HAP-1 (cell line): ENCODE measurements at regions of chr12 and their contacts with region 1.

Region 1: DNA sequence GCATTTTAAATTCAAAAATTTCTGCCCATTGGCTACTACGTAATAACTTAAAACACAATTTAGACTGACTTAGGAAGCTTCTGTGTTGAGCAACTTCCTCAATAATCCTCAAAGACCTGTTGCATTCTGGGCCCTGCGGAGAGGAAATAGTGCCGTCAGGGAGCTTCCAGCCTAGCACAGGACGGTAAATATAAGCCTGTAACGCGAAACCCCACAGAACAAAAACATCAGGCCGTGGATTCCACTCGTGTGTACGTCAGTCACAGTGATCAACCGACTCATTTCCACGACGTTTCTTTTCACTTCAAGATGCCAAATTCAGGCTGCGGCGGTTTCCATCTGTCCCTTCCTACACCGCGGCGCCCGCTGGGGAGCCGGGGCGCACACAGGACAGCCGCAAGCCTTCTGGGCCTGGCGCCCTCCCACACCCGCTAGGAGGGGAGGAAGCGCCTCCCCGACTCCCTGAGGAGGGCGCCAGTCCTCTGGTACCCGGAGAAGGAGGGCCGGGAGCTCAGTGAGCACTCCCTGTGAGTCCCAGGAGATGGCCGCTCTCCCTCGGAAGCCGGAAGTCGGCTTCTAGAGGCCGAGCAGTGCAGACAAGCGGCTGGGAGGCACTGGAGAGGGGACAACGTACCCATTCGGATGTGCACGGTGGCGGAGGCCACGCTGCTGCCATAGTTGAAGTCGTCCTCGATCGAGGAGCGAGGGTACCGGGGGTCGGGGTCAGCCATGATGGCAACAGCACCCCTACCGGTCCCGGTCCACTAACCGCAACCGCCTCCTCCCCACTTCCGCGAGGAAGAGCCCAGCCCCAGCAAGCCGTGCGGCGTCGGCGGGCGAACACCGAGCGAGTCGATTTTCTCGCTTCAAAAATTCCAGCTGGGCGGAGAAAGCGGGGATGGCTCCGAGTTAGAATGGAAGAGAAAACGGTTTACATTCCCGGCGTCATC is at the start of gene TMBIM4:
- DNase-seq: peak; percentile 82 to 88
- H3K4me3 ChIP-seq: peak within 1 kb of the TSS; percentile 71
- H3K4me1 ChIP-seq: peaks cover 7% of the 10 kb centered on the region
- H3K27me3 ChIP-seq: no peaks in the 10 kb centered on the region

Region 2: DNA sequence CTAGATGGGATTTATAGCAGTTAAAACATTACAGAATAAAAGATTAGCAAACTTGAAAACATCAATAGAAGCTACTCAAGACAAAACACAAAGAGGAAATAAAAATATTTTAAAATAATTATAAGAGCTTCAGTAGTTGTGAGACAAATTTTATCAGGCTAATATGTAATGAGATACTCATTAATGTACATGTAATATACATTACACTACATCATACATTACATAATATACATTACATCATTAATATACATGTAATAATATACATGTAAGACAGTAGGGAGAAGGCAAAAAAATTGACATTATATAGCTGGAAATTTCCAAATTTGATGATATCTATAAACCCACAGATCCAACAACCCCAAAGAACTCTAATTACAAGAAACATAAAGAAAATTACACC is 594.6 kb before region 1 on chr12:
- in situ Hi-C with region 1: no loop called
- DNase-seq: no peak
- H3K4me3 ChIP-seq: no peak overlapping the region
- H3K4me1 ChIP-seq: no peaks in the 10 kb centered on the region
- H3K27me3 ChIP-seq: peaks cover 2% of the 10 kb centered on the region; the same call in 1 of the 2 replicates

Region 3: GRCh38 chr12:65649126-65649525 is 520.4 kb before region 1 on chr12:
- in situ Hi-C with region 1: no loop called
- DNase-seq: no peak
- H3K4me3 ChIP-seq: no peak overlapping the region
- H3K4me1 ChIP-seq: no peaks in the 10 kb centered on the region
- H3K27me3 ChIP-seq: no peaks in the 10 kb centered on the region

Region 4: GRCh38 chr12:66409195-66409871 is 239.8 kb after region 1 on chr12:
- in situ Hi-C with region 1: loop called (anchors 25 kb)
- DNase-seq: peak; percentile 47 to 66
- H3K4me3 ChIP-seq: no peak overlapping the region
- H3K4me1 ChIP-seq: no peaks in the 10 kb centered on the region
- H3K27me3 ChIP-seq: no peaks in the 10 kb centered on the region